CD4-positive, alpha-beta T cell (primary cell): ENCODE measurements at regions of chr19 and their contacts with region 1.

Region 1: DNA sequence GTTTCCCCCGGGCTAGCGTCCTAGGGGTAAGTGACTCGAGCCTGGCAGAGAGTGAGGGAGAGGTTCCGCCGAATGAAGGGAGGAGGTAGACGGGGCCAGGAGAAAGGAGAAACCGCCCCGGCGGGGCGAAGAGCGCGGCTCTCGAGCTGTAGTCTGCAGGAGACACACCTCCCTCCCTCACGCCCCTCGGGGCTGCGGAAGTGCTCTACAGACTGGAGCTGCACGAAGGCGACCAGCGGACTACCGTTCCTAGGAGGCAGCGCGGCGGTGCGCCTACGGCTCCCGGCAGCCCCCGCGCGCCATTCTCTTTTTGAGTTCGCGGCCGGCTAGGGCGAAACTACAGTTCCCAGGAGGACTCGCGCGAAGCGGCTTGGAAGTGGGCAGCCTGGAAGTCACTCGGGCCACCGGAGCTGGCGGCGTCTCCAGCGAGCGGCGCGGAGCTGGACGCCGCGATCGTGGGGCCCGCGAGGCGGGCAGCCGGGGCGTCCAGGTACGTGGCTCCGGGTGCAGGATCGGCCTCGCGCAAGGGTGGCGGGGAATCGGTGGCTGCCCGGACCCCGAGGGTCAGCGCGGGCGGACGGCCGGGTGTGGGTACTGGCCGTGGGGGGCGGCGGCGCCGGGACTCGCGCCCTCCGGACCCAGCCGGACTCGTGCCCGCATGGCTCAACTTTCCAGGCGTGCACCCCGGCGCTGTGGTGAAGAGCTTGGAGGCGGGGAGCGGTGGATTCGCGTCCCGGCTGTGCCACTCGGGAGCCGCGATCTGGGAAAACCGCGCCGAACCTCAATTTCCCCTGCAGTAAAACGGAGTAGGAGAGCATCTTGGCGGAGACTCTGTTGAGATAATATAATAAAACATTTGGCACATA is at the start of gene SIPA1L3:
- DNase-seq: peak; percentile 84 to 96 (median 92)
- ATAC-seq: peak; percentile 98
- H3K4me3 ChIP-seq: peak within 1 kb of the TSS; percentile 98
- H3K4me3 Mint-ChIP-seq: peak within 1 kb of the TSS; percentile 97
- H3K27ac ChIP-seq: peak within 1 kb of the TSS; percentile 23 to 68
- H3K27ac Mint-ChIP-seq: peak within 1 kb of the TSS; percentile 91
- H3K4me1 ChIP-seq: peaks cover 26% of the 10 kb centered on the region
- H3K4me1 Mint-ChIP-seq: peaks cover 37% of the 10 kb centered on the region
- H3K27me3 ChIP-seq: no peaks in the 10 kb centered on the region
- H3K27me3 Mint-ChIP-seq: no peaks in the 10 kb centered on the region
- CTCF ChIP-seq: no peak
- total RNA-seq, gene SIPA1L3: 15.5 to 17.7 TPM

Region 2: DNA sequence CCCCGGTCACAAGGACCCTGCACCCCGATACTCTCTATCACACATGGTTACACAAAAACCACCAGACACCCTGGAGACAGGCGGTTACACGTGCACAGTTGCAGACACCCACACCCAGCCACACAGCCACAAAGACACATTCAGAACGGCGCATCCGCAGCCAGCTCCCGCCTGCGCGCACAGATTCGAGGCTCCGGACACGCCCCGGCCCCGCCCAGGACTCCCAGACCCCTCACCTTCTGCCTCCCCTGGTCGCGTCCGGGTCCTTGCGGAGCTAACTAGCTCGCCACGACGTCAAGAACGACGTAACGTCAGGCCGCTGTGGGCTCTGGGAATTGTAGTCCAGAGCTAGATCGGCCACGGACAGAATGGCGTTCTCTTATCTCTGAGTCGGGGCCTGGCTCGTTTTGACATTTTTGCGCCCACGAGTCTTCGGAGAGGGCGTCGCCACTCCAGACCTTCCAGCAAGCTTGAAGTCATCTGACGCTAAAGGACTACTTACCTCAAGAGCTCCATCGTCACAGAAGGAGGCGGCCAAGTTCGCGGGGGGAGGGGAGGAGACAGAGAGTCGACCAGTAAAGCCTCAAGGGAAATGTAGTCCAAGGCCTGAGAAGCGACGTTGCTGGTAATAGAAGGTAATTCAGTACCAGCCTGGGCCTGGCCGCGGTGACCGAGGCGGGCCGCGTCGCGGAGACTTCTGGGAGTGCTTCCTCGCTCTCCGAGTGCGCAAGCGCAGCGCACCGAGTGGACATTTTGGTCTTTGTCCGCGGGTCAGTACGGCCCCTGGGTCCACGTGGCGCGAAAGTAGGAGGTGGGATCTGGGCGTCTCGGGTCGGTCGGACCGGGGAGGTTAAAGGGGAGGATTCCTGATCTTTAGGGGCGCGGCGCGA is 1692.5 kb before region 1 on chr19 and contains the starts of genes ZNF146 and ZNF565:
- CTCF ChIA-PET with region 1: no interaction called
- POLR2A ChIA-PET with region 1: no interaction called
- intact Hi-C with region 1: loop called (anchors 5 to 10 kb)
- DNase-seq: peak; percentile 90 to 99 (median 94)
- ATAC-seq: peak; percentile 84
- H3K4me3 ChIP-seq: peak within 1 kb of the TSS; percentile 86
- H3K4me3 Mint-ChIP-seq: no peak within 1 kb of the TSS
- H3K27ac ChIP-seq: peak within 1 kb of the TSS; percentile 93 to 99
- H3K27ac Mint-ChIP-seq: no peak within 1 kb of the TSS
- H3K4me1 ChIP-seq: peaks cover 28% of the 10 kb centered on the region
- H3K4me1 Mint-ChIP-seq: peaks cover 17% of the 10 kb centered on the region
- H3K27me3 ChIP-seq: no peaks in the 10 kb centered on the region
- H3K27me3 Mint-ChIP-seq: no peaks in the 10 kb centered on the region
- CTCF ChIP-seq: no peak
- total RNA-seq, gene ZNF146: 13.6 to 13.7 TPM
- total RNA-seq, gene ZNF565: 7.6 to 8.5 TPM

Region 3: GRCh38 chr19:37334179-37335071 is 572.7 kb before region 1 on chr19:
- CTCF ChIA-PET with region 1: interaction called, 3 read pairs
- POLR2A ChIA-PET with region 1: interaction called, 3 read pairs
- intact Hi-C with region 1: loop called in 1 of 2 experiments (anchors 10 kb)
- DNase-seq: peak; percentile 76 to 96 (median 85)
- ATAC-seq: peak; percentile 99
- H3K4me3 ChIP-seq: peak overlapping the region; percentile 66
- H3K4me3 Mint-ChIP-seq: peak overlapping the region; percentile 92
- H3K27ac ChIP-seq: peak overlapping the region; percentile 54 to 69
- H3K27ac Mint-ChIP-seq: peak overlapping the region; percentile 95
- H3K4me1 ChIP-seq: peaks cover 20% of the 10 kb centered on the region
- H3K4me1 Mint-ChIP-seq: peaks cover 40% of the 10 kb centered on the region
- H3K27me3 ChIP-seq: no peaks in the 10 kb centered on the region
- H3K27me3 Mint-ChIP-seq: no peaks in the 10 kb centered on the region
- CTCF ChIP-seq: no peak

Region 4: GRCh38 chr19:37779127-37780005 is 127.7 kb before region 1 on chr19 and contains the start of gene ZNF573:
- CTCF ChIA-PET with region 1: interaction called, 9 read pairs
- POLR2A ChIA-PET with region 1: interaction called, 16 read pairs
- intact Hi-C with region 1: no loop called
- DNase-seq: peak; percentile 62 to 97 (median 77)
- ATAC-seq: peak; percentile 87
- H3K4me3 ChIP-seq: peak within 1 kb of the TSS; percentile 77
- H3K4me3 Mint-ChIP-seq: peak within 1 kb of the TSS; percentile 89
- H3K27ac ChIP-seq: peak within 1 kb of the TSS; percentile 88 to 94
- H3K27ac Mint-ChIP-seq: peak within 1 kb of the TSS; percentile 97
- H3K4me1 ChIP-seq: peaks cover 17% of the 10 kb centered on the region
- H3K4me1 Mint-ChIP-seq: peaks cover 46% of the 10 kb centered on the region
- H3K27me3 ChIP-seq: no peaks in the 10 kb centered on the region
- H3K27me3 Mint-ChIP-seq: no peaks in the 10 kb centered on the region
- CTCF ChIP-seq: no peak
- total RNA-seq, gene ZNF573: 4.6 to 5.0 TPM

Region 5: GRCh38 chr19:37790244-37790925 is 116.7 kb before region 1 on chr19:
- CTCF ChIA-PET with region 1: no interaction called
- POLR2A ChIA-PET with region 1: no interaction called
- intact Hi-C with region 1: no loop called
- DNase-seq: no peak
- ATAC-seq: no peak
- H3K4me3 ChIP-seq: no peak overlapping the region
- H3K4me3 Mint-ChIP-seq: no peak overlapping the region
- H3K27ac ChIP-seq: no peak overlapping the region
- H3K27ac Mint-ChIP-seq: no peak overlapping the region
- H3K4me1 ChIP-seq: no peaks in the 10 kb centered on the region
- H3K4me1 Mint-ChIP-seq: no peaks in the 10 kb centered on the region
- H3K27me3 ChIP-seq: no peaks in the 10 kb centered on the region
- H3K27me3 Mint-ChIP-seq: no peaks in the 10 kb centered on the region
- CTCF ChIP-seq: no peak

Region 6: DNA sequence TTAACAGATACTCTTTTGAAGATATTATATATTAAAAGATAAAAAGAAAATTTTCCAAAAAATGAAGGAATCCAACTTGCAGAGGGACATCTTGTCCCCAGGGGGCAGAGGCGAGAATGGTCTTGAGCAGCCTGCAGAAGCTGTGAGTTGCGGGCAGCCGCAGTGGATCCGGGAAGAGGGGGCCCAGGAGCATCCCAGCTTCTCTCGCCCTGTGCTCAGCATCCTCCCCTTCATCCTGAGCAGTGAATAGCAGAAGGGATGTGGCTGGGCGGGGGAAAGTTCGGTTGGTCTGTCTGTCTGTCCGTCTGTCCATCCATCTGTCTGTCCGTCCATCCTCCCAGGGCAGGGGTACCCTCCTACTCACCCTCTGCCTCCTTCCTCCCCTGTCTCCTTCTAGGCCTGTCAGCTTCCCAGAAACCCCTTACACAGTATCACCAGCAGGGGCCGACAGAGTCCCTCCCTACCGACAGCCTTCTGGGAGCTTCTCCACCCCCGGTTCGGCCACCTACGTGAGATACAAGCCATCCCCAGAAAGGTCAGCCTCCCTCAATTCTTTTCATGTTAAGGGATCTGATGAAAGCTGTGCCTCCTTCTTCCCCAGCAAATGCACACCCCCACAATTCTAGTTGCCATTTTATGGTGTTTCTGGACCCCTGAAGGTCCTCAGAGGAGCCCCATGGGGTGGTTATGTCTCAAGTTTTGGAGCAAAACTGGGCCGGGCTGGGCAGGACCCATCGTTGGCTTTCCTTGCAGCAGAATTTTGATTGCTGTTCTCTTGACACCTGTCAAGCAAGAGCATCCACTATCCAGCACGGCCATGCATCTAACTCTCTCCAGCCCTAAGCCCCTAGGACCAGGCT is 235.3 kb after region 1 on chr19:
- CTCF ChIA-PET with region 1: interaction called, 13 read pairs
- POLR2A ChIA-PET with region 1: no interaction called
- intact Hi-C with region 1: loop called (anchors 2 to 5 kb)
- DNase-seq: peak in 10 of 14 experiments; percentile 9 to 47 (median 22)
- ATAC-seq: peak; percentile 58
- H3K4me3 ChIP-seq: no peak overlapping the region
- H3K4me3 Mint-ChIP-seq: no peak overlapping the region
- H3K27ac ChIP-seq: no peak overlapping the region
- H3K27ac Mint-ChIP-seq: no peak overlapping the region
- H3K4me1 ChIP-seq: no peaks in the 10 kb centered on the region
- H3K4me1 Mint-ChIP-seq: no peaks in the 10 kb centered on the region
- H3K27me3 ChIP-seq: no peaks in the 10 kb centered on the region
- H3K27me3 Mint-ChIP-seq: no peaks in the 10 kb centered on the region
- CTCF ChIP-seq: peak; percentile 47

Region 7: GRCh38 chr19:38315657-38316476 is 408.8 kb after region 1 on chr19 and contains the start of gene YIF1B:
- CTCF ChIA-PET with region 1: no interaction called
- POLR2A ChIA-PET with region 1: interaction called, 3 read pairs
- intact Hi-C with region 1: loop called (anchors 1 to 5 kb)
- DNase-seq: peak; percentile 90 to 98 (median 94)
- ATAC-seq: peak; percentile 90
- H3K4me3 ChIP-seq: peak within 1 kb of the TSS; percentile 76
- H3K4me3 Mint-ChIP-seq: peak within 1 kb of the TSS; percentile 90
- H3K27ac ChIP-seq: peak within 1 kb of the TSS; percentile 79 to 88
- H3K27ac Mint-ChIP-seq: peak within 1 kb of the TSS; percentile 88
- H3K4me1 ChIP-seq: peaks cover 51% of the 10 kb centered on the region
- H3K4me1 Mint-ChIP-seq: peaks cover 45% of the 10 kb centered on the region
- H3K27me3 ChIP-seq: no peaks in the 10 kb centered on the region
- H3K27me3 Mint-ChIP-seq: no peaks in the 10 kb centered on the region
- CTCF ChIP-seq: no peak
- total RNA-seq, gene YIF1B: 15.9 to 17.1 TPM

Region 8: DNA sequence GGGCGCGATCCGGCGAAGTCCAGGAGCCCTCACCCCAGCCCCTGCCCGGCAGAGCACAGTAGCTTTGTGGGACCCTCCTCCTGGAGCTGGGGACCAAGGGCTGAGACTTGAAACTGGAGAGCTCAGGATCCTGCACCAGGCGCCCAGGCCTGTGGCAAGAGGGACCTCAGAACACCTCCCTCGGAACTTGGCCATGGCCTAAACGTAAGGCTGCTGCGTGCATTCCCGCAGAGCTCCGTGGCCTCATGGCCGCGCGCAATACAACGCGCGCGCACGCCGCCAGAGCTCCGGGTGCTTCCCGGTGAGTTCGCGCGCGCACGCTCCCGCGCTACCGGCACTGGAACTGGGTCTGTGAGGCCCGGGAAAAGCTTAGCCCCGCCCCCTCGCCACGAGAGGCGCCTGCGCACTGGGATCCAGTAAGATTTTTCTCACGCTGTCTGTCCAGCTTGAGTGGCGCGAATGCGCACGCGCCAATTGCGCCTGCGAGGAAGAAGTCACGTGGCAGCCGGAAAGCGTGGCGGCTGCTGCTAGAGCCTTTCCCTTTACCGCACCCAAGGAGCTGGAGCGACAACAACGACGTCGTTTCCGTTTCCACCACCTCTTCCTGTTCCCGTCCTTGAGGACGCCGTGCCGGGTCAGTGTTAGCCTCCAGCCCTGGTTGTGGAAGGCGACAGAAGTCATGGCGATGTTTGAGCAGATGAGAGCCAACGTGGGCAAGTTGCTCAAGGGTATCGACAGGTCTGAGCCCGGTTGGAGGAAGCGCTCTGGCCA is 711.7 kb after region 1 on chr19 and contains the start of gene EIF3K:
- CTCF ChIA-PET with region 1: no interaction called
- POLR2A ChIA-PET with region 1: no interaction called
- intact Hi-C with region 1: loop called in 1 of 2 experiments (anchors 10 kb)
- DNase-seq: peak; percentile 92 to 100 (median 96)
- ATAC-seq: peak; percentile 63
- H3K4me3 ChIP-seq: peak within 1 kb of the TSS; percentile 97
- H3K4me3 Mint-ChIP-seq: peak within 1 kb of the TSS; percentile 97
- H3K27ac ChIP-seq: peak within 1 kb of the TSS; percentile 84 to 94
- H3K27ac Mint-ChIP-seq: peak within 1 kb of the TSS; percentile 94
- H3K4me1 ChIP-seq: peaks cover 62% of the 10 kb centered on the region
- H3K4me1 Mint-ChIP-seq: peaks cover 59% of the 10 kb centered on the region
- H3K27me3 ChIP-seq: no peaks in the 10 kb centered on the region
- H3K27me3 Mint-ChIP-seq: no peaks in the 10 kb centered on the region
- CTCF ChIP-seq: no peak
- total RNA-seq, gene EIF3K: 309 to 322 TPM